ENCODE measurements at regions of chr5 and their contacts with region 1.

Region 1: GRCh38 chr5:66828548-66829357 is 232.6 kb downstream of the MAST4 start:
- DNase-seq: no peak
- ATAC-seq: peak; percentile 91
- H3K4me3 Mint-ChIP-seq: peak overlapping the region; percentile 80
- H3K27ac Mint-ChIP-seq: peak overlapping the region; percentile 21
- H3K4me1 Mint-ChIP-seq: peaks cover 20% of the 10 kb centered on the region
- H3K27me3 Mint-ChIP-seq: peaks cover 29% of the 10 kb centered on the region
- CTCF ChIP-seq: no peak

Region 2: DNA sequence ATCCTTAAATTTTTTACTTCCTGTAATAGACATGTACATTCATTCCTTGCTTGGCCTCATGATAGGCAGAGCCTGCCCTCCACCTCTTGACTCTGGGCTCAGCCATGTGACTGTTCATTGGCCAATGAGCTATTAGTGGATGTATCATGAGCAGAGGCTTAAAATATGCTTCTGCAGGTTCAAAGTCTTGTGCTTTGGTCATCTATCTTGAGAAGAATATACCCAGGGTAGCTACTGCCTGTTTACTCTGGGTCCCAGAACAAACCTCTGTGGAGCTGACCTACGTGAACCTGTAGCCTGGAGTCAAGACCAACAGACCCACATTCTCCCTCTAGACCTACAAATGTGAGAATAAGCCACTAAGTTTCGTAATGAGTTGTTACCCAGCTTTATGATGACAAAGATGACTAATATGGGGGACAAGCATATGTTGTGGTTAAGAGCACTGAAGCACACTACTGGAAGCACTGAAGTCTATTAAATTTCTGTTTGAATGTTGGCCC is 11.8 kb after region 1 on chr5:
- CTCF ChIA-PET with region 1: interaction called, 3 read pairs
- POLR2A ChIA-PET with region 1: interaction called, 6 read pairs
- intact Hi-C with region 1: loop called (anchors 1 kb)
- DNase-seq: no peak
- ATAC-seq: peak; percentile 92
- H3K4me3 Mint-ChIP-seq: no peak overlapping the region
- H3K27ac Mint-ChIP-seq: no peak overlapping the region
- H3K4me1 Mint-ChIP-seq: peaks cover 16% of the 10 kb centered on the region
- H3K27me3 Mint-ChIP-seq: peaks cover 8% of the 10 kb centered on the region
- CTCF ChIP-seq: no peak

Region 3: DNA sequence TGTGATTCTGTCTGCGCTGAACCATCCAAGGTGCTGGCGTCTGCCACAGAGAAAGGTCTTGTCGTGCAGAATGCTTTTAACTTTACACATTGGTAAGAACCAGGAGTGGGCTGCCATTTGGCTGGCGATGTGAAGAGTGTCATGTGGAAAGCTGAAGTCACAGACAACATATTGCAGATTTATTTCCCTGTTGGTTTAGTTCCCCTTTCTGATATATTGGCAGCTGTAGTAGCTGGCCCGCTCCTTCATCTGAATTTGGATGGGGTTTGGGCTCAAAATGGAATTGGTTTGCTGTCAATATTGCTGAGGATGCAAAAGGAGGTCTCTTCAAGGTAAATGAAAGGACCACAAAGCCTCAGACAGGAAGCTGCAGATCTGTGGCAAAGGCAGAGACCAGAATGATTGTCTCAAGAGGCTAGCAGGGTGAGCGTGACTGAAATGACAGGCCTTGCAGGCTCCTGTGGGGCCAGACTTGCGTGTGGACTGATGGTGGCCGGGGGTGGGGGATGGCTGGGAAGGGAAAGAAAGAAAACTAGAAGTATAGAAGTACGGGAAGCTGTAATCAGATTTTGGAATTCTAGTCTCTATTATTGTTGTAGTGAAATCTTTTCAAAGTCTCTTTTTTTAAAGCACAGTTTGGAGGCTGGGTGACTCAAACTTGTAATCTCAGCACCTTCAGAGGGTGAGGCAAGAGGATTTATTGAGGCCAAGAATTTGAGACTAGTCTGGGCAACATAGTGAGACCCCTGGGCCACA is 392.9 kb after region 1 on chr5:
- CTCF ChIA-PET with region 1: no interaction called
- POLR2A ChIA-PET with region 1: no interaction called
- intact Hi-C with region 1: loop called (anchors 5 kb)
- DNase-seq: no peak
- ATAC-seq: peak; percentile 75
- H3K4me3 Mint-ChIP-seq: peak overlapping the region; percentile 78
- H3K27ac Mint-ChIP-seq: peak overlapping the region; percentile 97
- H3K4me1 Mint-ChIP-seq: peaks cover 65% of the 10 kb centered on the region
- H3K27me3 Mint-ChIP-seq: no peaks in the 10 kb centered on the region
- CTCF ChIP-seq: no peak